CD4-positive, alpha-beta T cell (primary cell): ENCODE measurements at regions of chr7 and their contacts with region 1.

Region 1: GRCh38 chr7:87152107-87152844 is at the start of gene DMTF1:
- DNase-seq: peak; percentile 72 to 94 (median 80)
- ATAC-seq: peak; percentile 76
- H3K4me3 ChIP-seq: peak within 1 kb of the TSS; percentile 74
- H3K4me3 Mint-ChIP-seq: peak within 1 kb of the TSS; percentile 96
- H3K27ac ChIP-seq: peak within 1 kb of the TSS; percentile 87 to 90
- H3K27ac Mint-ChIP-seq: peak within 1 kb of the TSS; percentile 97
- H3K4me1 ChIP-seq: peaks cover 9% of the 10 kb centered on the region
- H3K4me1 Mint-ChIP-seq: peaks cover 54% of the 10 kb centered on the region
- H3K27me3 ChIP-seq: no peaks in the 10 kb centered on the region
- H3K27me3 Mint-ChIP-seq: no peaks in the 10 kb centered on the region
- CTCF ChIP-seq: no peak
- total RNA-seq, gene DMTF1: 114 to 115 TPM

Region 2: GRCh38 chr7:86926732-86927131 is 225.5 kb before region 1 on chr7:
- CTCF ChIA-PET with region 1: interaction called, 18 read pairs
- POLR2A ChIA-PET with region 1: interaction called, 3 read pairs
- intact Hi-C with region 1: loop called in 1 of 2 experiments (anchors 1 kb)
- DNase-seq: peak in 8 of 14 experiments; percentile 8 to 72 (median 34)
- ATAC-seq: peak; percentile 94
- H3K4me3 ChIP-seq: no peak overlapping the region
- H3K4me3 Mint-ChIP-seq: no peak overlapping the region
- H3K27ac ChIP-seq: no peak overlapping the region
- H3K27ac Mint-ChIP-seq: no peak overlapping the region
- H3K4me1 ChIP-seq: no peaks in the 10 kb centered on the region
- H3K4me1 Mint-ChIP-seq: no peaks in the 10 kb centered on the region
- H3K27me3 ChIP-seq: no peaks in the 10 kb centered on the region
- H3K27me3 Mint-ChIP-seq: peaks cover 4% of the 10 kb centered on the region
- CTCF ChIP-seq: peak; percentile 78

Region 3: DNA sequence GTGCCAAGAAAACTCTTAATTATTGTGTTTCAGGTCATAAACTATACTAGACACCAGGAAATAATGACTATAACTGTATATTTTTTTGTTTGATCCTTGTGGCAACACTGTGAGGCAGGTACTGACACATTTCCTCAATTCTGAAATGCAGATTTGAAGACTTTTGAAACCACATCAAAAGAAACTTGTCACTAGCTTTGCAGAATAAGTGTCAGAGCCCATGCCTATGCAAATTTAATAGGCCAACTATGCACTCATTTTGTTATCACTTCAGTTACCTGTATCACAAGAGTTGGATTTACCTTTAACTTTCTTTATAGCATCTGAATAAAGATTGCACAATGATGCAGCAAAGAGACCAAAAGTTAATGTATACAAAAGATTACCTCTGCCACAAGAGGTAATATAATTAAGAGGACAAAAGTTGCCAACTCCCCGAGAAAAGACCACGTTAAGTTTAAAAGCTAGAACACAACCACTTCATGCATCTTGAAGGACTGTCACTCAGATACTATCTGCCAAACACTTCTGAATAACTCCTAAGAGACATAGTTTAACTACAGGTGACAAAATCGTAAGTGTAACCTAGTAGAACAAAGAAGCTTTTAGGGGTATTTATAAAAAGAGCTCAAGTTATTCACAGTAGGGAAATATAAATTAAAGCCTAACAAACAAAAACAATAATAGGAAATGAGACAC is 173.3 kb before region 1 on chr7:
- CTCF ChIA-PET with region 1: no interaction called
- POLR2A ChIA-PET with region 1: interaction called, 14 read pairs
- intact Hi-C with region 1: no loop called
- DNase-seq: peak in 6 of 14 experiments; percentile 5 to 90 (median 58)
- ATAC-seq: peak; percentile 90
- H3K4me3 ChIP-seq: no peak overlapping the region
- H3K4me3 Mint-ChIP-seq: peak overlapping the region; percentile 5
- H3K27ac ChIP-seq: peak overlapping the region; percentile 36 to 47
- H3K27ac Mint-ChIP-seq: peak overlapping the region; percentile 86
- H3K4me1 ChIP-seq: peaks cover 21% of the 10 kb centered on the region
- H3K4me1 Mint-ChIP-seq: peaks cover 54% of the 10 kb centered on the region
- H3K27me3 ChIP-seq: no peaks in the 10 kb centered on the region
- H3K27me3 Mint-ChIP-seq: no peaks in the 10 kb centered on the region
- CTCF ChIP-seq: no peak

Region 4: DNA sequence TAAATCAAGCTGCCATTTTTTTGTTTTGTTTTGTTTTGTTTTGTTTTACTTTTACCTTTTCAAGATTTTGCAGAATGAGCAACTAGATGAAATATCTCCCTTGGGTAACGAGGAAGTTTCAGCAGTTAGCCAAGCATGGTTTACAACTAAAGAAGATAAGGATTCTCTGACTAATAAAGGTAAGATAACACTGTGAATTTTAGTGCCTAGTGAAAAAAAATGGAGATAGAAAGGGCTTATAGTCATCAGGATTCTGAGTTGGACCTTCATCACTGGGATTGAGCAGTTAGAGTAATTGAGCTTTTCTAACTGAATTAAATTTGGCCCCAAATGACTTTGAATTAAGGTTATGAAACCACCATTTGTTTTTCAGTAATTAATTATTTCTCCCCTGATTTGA is 21.2 kb after region 1 on chr7:
- CTCF ChIA-PET with region 1: interaction called, 3 read pairs
- POLR2A ChIA-PET with region 1: interaction called, 34 read pairs
- intact Hi-C with region 1: no loop called
- DNase-seq: no peak
- ATAC-seq: no peak
- H3K4me3 ChIP-seq: no peak overlapping the region
- H3K4me3 Mint-ChIP-seq: no peak overlapping the region
- H3K27ac ChIP-seq: no peak overlapping the region
- H3K27ac Mint-ChIP-seq: peak overlapping the region; percentile 54
- H3K4me1 ChIP-seq: no peaks in the 10 kb centered on the region
- H3K4me1 Mint-ChIP-seq: peaks cover 50% of the 10 kb centered on the region
- H3K27me3 ChIP-seq: no peaks in the 10 kb centered on the region
- H3K27me3 Mint-ChIP-seq: no peaks in the 10 kb centered on the region
- CTCF ChIP-seq: no peak

Region 5: DNA sequence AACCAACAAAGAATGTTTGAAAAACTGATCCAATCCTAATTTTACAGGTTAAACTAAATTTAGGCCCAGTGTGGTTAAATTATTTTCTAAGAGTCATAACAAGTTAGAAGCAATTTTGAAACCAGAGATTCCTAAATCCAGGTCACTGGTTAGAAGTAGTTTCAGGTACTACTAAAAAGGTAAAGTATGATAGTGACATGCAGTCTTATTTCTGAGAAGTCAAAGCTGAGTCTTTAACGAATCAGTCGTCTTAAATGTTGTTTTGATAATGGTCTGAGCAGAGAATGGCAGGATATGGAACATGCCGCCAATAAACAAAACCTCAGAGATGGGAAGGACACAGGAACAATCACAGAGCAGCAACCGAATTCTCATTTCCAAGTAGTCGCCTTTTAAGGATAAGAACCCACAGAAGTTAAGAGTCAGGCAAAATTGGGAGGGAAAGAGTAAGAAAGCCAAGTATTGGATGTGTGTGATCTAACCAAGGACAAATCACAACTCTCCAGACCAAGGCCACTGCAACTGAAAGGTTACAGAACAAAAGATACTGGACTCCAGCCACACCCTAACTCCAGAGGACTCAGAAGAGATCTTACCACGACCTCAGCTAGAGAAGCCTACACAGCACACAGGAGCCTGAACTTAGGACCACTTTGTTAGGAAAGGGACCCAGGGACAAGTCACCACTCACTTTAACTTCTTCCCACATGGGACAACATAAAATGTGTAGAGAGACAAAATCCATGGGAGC is 47.6 kb after region 1 on chr7:
- CTCF ChIA-PET with region 1: interaction called, 3 read pairs
- POLR2A ChIA-PET with region 1: interaction called, 10 read pairs
- intact Hi-C with region 1: loop called in 1 of 2 experiments (anchors 5 kb)
- DNase-seq: no peak
- ATAC-seq: no peak
- H3K4me3 ChIP-seq: no peak overlapping the region
- H3K4me3 Mint-ChIP-seq: peak overlapping the region; percentile 9
- H3K27ac ChIP-seq: no peak overlapping the region
- H3K27ac Mint-ChIP-seq: peak overlapping the region; percentile 68
- H3K4me1 ChIP-seq: peaks cover 18% of the 10 kb centered on the region
- H3K4me1 Mint-ChIP-seq: peaks cover 74% of the 10 kb centered on the region
- H3K27me3 ChIP-seq: no peaks in the 10 kb centered on the region
- H3K27me3 Mint-ChIP-seq: no peaks in the 10 kb centered on the region
- CTCF ChIP-seq: no peak

Region 6: DNA sequence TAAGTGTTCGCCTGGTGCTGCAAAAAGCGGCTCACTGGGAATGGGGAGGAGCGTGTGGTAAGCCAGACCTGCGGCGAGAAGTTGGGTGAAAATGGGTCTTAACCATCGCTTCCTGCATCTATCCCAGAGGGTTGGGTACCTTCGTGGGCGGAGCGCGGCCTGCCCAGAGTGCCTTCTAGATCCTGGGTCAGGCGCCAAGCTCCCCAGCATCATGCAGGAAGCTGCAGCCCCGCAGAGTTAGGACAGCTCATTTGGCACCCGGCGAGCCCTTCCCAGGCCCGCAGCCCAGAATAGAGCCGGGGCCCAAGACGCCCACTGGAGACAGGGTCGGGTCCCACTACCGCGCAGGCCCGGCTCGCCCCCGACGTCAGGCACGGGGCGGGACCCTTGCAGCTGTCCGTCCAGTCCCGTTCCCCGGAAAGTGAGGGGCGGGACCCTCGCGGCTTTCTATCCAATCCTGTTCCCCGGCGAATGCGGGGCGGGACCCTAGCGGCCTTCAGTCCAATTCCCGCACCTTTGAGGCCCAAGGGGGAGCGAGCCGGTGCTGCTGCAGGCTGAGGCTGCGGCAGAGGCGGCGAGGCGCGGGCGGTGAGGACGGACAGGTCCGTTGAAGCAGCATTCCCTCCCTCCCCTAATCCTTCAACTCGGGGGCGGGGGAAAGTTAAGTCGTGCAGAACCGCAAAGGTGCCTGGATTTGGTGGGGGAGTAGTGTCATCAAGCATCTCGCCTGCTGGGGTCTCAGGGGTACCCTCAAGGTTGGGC is 193.1 kb after region 1 on chr7 and contains the start of gene CROT:
- CTCF ChIA-PET with region 1: no interaction called
- POLR2A ChIA-PET with region 1: interaction called, 27 read pairs
- intact Hi-C with region 1: loop called in 1 of 2 experiments (anchors 5 kb)
- DNase-seq: peak; percentile 82 to 96 (median 92)
- ATAC-seq: peak; percentile 96
- H3K4me3 ChIP-seq: peak within 1 kb of the TSS; percentile 75
- H3K4me3 Mint-ChIP-seq: peak within 1 kb of the TSS; percentile 93
- H3K27ac ChIP-seq: peak within 1 kb of the TSS; percentile 73 to 78
- H3K27ac Mint-ChIP-seq: peak within 1 kb of the TSS; percentile 94
- H3K4me1 ChIP-seq: peaks cover 22% of the 10 kb centered on the region
- H3K4me1 Mint-ChIP-seq: peaks cover 69% of the 10 kb centered on the region
- H3K27me3 ChIP-seq: no peaks in the 10 kb centered on the region
- H3K27me3 Mint-ChIP-seq: no peaks in the 10 kb centered on the region
- CTCF ChIP-seq: no peak
- total RNA-seq, gene CROT: 8.5 to 8.6 TPM

Region 7: GRCh38 chr7:87876040-87876868 is 724.0 kb after region 1 on chr7 and contains the starts of genes DBF4 and SLC25A40:
- CTCF ChIA-PET with region 1: no interaction called
- POLR2A ChIA-PET with region 1: interaction called, 5 read pairs
- intact Hi-C with region 1: loop called in 1 of 2 experiments (anchors 10 kb)
- DNase-seq: peak; percentile 88 to 98 (median 95)
- ATAC-seq: peak; percentile 86
- H3K4me3 ChIP-seq: peak within 1 kb of the TSS; percentile 97
- H3K4me3 Mint-ChIP-seq: peak within 1 kb of the TSS; percentile 98
- H3K27ac ChIP-seq: peak within 1 kb of the TSS; percentile 84 to 94
- H3K27ac Mint-ChIP-seq: peak within 1 kb of the TSS; percentile 98
- H3K4me1 ChIP-seq: peaks cover 9% of the 10 kb centered on the region
- H3K4me1 Mint-ChIP-seq: peaks cover 63% of the 10 kb centered on the region
- H3K27me3 ChIP-seq: no peaks in the 10 kb centered on the region
- H3K27me3 Mint-ChIP-seq: no peaks in the 10 kb centered on the region
- CTCF ChIP-seq: no peak
- total RNA-seq, gene DBF4: 58.1 to 61.9 TPM
- total RNA-seq, gene SLC25A40: 9.4 to 11.1 TPM